ENCODE measurements at regions of chr7 and their contacts with region 1.

Region 1: GRCh38 chr7:30276203-30276900 is 8.0 kb upstream of the ZNRF2 start:
- DNase-seq: peak; percentile 67
- H3K4me3 ChIP-seq: no peak overlapping the region
- H3K27ac ChIP-seq: no peak overlapping the region
- H3K4me1 ChIP-seq: no peaks in the 10 kb centered on the region
- H3K27me3 ChIP-seq: no peaks in the 10 kb centered on the region
- CTCF ChIP-seq: peak; percentile 89
- EP300 ChIP-seq: no peak
- RAD21 ChIP-seq: peak; percentile 98

Region 2: DNA sequence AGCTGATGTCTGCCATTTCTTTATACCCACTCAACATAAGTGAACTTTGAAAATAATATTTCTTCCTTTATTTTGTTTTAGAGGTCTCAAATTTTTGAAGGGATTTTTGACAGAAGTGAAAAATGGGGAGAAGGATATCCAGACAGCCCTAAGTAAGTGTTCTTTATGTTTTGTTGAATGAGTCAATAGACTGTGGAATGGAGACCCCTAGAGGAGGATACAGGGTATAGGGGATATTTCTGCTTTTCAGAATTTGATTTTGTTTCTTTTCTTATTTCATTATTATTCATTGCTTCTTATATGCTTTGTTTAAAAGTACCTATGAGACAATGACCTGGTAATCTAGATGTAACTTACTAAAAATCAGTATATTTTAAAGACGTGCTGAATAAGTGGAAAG is 213.8 kb before region 1 on chr7:
- CTCF ChIA-PET with region 1: no interaction called
- POLR2A ChIA-PET with region 1: no interaction called
- DNase-seq: peak; percentile 66
- H3K4me3 ChIP-seq: no peak overlapping the region
- H3K27ac ChIP-seq: no peak overlapping the region
- H3K4me1 ChIP-seq: no peaks in the 10 kb centered on the region
- H3K27me3 ChIP-seq: no peaks in the 10 kb centered on the region
- CTCF ChIP-seq: peak; percentile 96
- EP300 ChIP-seq: no peak
- RAD21 ChIP-seq: peak; percentile 86

Region 3: DNA sequence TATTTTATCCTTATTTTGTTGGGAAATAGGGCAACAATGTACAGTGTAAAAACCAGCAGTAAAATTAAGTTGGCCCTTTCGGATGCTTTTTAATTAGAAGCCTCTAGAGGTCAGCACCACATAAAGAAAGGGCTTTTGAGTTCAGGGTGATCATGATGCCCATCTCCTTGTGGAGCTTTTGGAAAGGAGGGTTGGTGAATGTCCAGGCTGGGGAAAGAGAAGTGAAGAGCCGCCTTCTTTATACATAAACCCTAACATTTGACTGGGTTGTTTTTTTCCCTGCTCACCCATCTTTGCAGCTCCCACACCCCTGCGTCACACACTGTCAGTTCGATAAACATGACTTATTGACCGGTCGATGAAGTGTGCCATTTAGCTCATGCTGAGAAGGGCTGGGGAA is 111.8 kb before region 1 on chr7:
- CTCF ChIA-PET with region 1: interaction called, 38 read pairs
- POLR2A ChIA-PET with region 1: no interaction called
- DNase-seq: peak; percentile 65
- H3K4me3 ChIP-seq: no peak overlapping the region
- H3K27ac ChIP-seq: peak overlapping the region in 1 of 2 experiments; percentile 77; a peak in 1 of 4 replicates
- H3K4me1 ChIP-seq: peaks cover 13 to 19% of the 10 kb centered on the region in 2 experiments
- H3K27me3 ChIP-seq: no peaks in the 10 kb centered on the region
- CTCF ChIP-seq: peak; percentile 85
- EP300 ChIP-seq: no peak
- RAD21 ChIP-seq: peak; percentile 95

Region 4: GRCh38 chr7:30263090-30263710 is 13.2 kb before region 1 on chr7:
- CTCF ChIA-PET with region 1: interaction called, 15 read pairs
- POLR2A ChIA-PET with region 1: no interaction called
- DNase-seq: no peak
- H3K4me3 ChIP-seq: no peak overlapping the region
- H3K27ac ChIP-seq: no peak overlapping the region
- H3K4me1 ChIP-seq: no peaks in the 10 kb centered on the region
- H3K27me3 ChIP-seq: no peaks in the 10 kb centered on the region
- CTCF ChIP-seq: no peak
- EP300 ChIP-seq: no peak
- RAD21 ChIP-seq: no peak

Region 5: GRCh38 chr7:30406664-30407425 is 130.5 kb after region 1 on chr7:
- CTCF ChIA-PET with region 1: interaction called, 31 read pairs
- POLR2A ChIA-PET with region 1: no interaction called
- DNase-seq: no peak
- H3K4me3 ChIP-seq: no peak overlapping the region
- H3K27ac ChIP-seq: no peak overlapping the region
- H3K4me1 ChIP-seq: peaks cover 0 to under 1% of the 10 kb centered on the region in 2 experiments; a peak in 1 of 4 replicates
- H3K27me3 ChIP-seq: no peaks in the 10 kb centered on the region
- CTCF ChIP-seq: no peak
- EP300 ChIP-seq: no peak
- RAD21 ChIP-seq: no peak

Region 6: DNA sequence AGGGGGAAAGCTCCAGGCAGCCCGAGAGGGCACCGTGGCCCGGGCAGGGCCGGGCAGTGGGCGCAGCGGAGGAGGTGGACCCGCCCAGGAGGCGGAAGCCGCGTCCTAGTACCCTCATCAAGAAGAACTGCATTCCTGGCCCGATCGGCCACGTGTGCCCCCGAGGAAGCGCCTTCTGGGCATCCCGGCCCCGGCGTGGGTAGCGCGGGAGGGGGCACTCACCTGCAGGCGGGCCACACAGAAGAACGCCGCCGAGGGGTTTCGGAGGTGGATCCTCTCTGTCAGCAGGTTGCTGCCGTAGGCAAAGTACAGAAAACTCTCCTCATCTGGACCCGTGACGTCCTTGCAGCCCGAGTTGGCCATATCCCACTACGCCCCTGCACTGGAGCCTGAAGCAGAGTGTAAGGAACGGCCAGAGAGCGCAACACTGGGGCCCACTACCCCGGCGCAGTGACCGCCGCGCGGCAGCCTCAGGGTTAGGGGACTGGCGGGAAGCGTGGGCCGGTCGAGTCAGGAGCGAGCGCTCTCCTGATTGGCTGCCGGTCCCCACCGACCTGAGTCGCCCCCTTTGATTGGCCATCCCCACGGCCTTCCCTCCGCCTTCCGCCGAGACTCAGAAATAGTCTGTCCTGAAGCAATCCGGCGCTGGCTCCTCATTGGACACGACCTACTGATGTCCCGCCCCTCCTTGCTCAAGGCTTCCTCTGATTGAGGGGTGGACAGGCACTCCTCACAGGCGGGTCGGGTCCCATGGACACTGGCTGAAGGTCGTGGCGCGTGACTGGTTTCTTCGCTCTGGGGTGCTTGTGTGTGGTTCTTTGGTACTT is 228.2 kb after region 1 on chr7 and contains the start of gene GGCT:
- CTCF ChIA-PET with region 1: interaction called, 14 read pairs
- POLR2A ChIA-PET with region 1: no interaction called
- DNase-seq: peak; percentile 100
- H3K4me3 ChIP-seq: peak within 1 kb of the TSS; percentile 94 to 98
- H3K27ac ChIP-seq: peak within 1 kb of the TSS; percentile 51 to 93
- H3K4me1 ChIP-seq: peaks cover 0 to 20% of the 10 kb centered on the region in 2 experiments; a peak in 2 of 4 replicates
- H3K27me3 ChIP-seq: no peaks in the 10 kb centered on the region
- CTCF ChIP-seq: no peak
- EP300 ChIP-seq: no peak
- RAD21 ChIP-seq: peak; percentile 5; the same call in 1 of the 2 replicates
- polyA plus RNA-seq, gene GGCT: 20.8 and 21.8 TPM in 2 replicates

Region 7: DNA sequence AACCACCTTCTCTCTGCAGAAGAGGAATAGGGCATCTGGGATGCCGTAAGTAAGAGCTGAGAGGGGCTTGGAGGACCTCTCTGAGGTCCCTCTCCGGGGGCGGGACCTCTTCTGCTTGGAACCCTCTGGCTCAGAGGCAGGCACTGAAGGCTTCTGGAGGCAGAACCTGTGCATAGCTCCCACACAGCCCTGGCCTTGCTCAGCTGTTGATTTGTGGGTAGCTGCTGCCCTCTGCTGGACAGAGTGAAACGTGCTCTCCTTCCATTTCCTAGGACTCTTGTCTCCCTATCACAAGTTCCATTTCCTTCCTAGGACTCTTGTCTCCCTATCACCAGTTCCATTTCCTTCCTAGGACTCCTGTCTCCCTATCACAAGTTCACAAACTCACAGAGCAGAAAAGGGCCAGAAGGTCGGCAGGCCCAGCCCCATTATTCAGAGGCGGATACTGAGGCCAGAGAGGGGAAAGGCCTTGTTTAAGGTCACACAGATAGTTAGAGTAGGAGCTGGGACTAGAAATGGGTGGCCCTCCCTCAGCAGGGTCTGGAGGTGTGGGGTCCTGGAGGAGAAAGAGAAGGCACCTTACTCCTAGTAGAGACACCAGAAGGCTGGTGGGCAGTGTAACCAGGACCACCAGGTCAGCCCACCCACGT is 288.0 kb after region 1 on chr7:
- CTCF ChIA-PET with region 1: interaction called, 263 read pairs
- POLR2A ChIA-PET with region 1: interaction called, 3 read pairs
- DNase-seq: peak; percentile 85
- H3K4me3 ChIP-seq: no peak overlapping the region
- H3K27ac ChIP-seq: no peak overlapping the region; a peak in 1 of 4 replicates
- H3K4me1 ChIP-seq: peaks cover 0 to 9% of the 10 kb centered on the region in 2 experiments; a peak in 1 of 4 replicates
- H3K27me3 ChIP-seq: no peaks in the 10 kb centered on the region
- CTCF ChIP-seq: peak; percentile 96
- EP300 ChIP-seq: no peak
- RAD21 ChIP-seq: peak; percentile 99